ENCODE measurements at regions of chr1 and their contacts with region 1.

Region 1: GRCh38 chr1:83905315-83905907 is 93.5 kb downstream of the TTLL7 start:
- DNase-seq: peak; percentile 34
- ATAC-seq: no peak
- H3K4me3 ChIP-seq: no peak overlapping the region
- H3K4me3 Mint-ChIP-seq: no peak overlapping the region
- H3K27ac ChIP-seq: no peak overlapping the region
- H3K27ac Mint-ChIP-seq: no peak overlapping the region
- H3K4me1 ChIP-seq: no peaks in the 10 kb centered on the region
- H3K4me1 Mint-ChIP-seq: no peaks in the 10 kb centered on the region
- H3K27me3 ChIP-seq: peaks cover 0 to 4% (median 0%) of the 10 kb centered on the region in 4 experiments
- H3K27me3 Mint-ChIP-seq: peaks cover 10% of the 10 kb centered on the region
- CTCF ChIP-seq: peak; percentile 95

Region 2: GRCh38 chr1:84122780-84123382 is 217.5 kb after region 1 on chr1:
- CTCF ChIA-PET with region 1: interaction called, 3 read pairs
- POLR2A ChIA-PET with region 1: no interaction called
- intact Hi-C with region 1: loop called (anchors 2 kb)
- DNase-seq: peak; percentile 53
- ATAC-seq: no peak
- H3K4me3 ChIP-seq: no peak overlapping the region
- H3K4me3 Mint-ChIP-seq: no peak overlapping the region
- H3K27ac ChIP-seq: no peak overlapping the region
- H3K27ac Mint-ChIP-seq: no peak overlapping the region
- H3K4me1 ChIP-seq: no peaks in the 10 kb centered on the region
- H3K4me1 Mint-ChIP-seq: peaks cover 1% of the 10 kb centered on the region
- H3K27me3 ChIP-seq: no peaks in the 10 kb centered on the region
- H3K27me3 Mint-ChIP-seq: no peaks in the 10 kb centered on the region
- CTCF ChIP-seq: peak; percentile 78

Region 3: GRCh38 chr1:84620720-84621313 is 715.4 kb after region 1 on chr1:
- CTCF ChIA-PET with region 1: no interaction called
- POLR2A ChIA-PET with region 1: no interaction called
- intact Hi-C with region 1: loop called (anchors 2 kb)
- DNase-seq: peak; percentile 90
- ATAC-seq: peak; percentile 92
- H3K4me3 ChIP-seq: peak overlapping the region in 4 of 5 experiments; percentile 59 to 84 (median 72)
- H3K4me3 Mint-ChIP-seq: peak overlapping the region; percentile 96
- H3K27ac ChIP-seq: no peak overlapping the region
- H3K27ac Mint-ChIP-seq: peak overlapping the region; percentile 69
- H3K4me1 ChIP-seq: peaks cover 0 to 4% of the 10 kb centered on the region in 2 donors
- H3K4me1 Mint-ChIP-seq: peaks cover 6% of the 10 kb centered on the region
- H3K27me3 ChIP-seq: peaks cover 0 to 5% (median 0%) of the 10 kb centered on the region in 4 experiments
- H3K27me3 Mint-ChIP-seq: peaks cover 6% of the 10 kb centered on the region
- CTCF ChIP-seq: peak; percentile 100

Region 4: GRCh38 chr1:84753516-84754385 is 848.3 kb after region 1 on chr1:
- CTCF ChIA-PET with region 1: interaction called, 11 read pairs
- POLR2A ChIA-PET with region 1: no interaction called
- intact Hi-C with region 1: no loop called
- DNase-seq: peak; percentile 76
- ATAC-seq: peak; percentile 81
- H3K4me3 ChIP-seq: no peak overlapping the region
- H3K4me3 Mint-ChIP-seq: no peak overlapping the region
- H3K27ac ChIP-seq: no peak overlapping the region
- H3K27ac Mint-ChIP-seq: no peak overlapping the region
- H3K4me1 ChIP-seq: peaks cover 1 to 3% of the 10 kb centered on the region in 2 donors
- H3K4me1 Mint-ChIP-seq: peaks cover 3% of the 10 kb centered on the region
- H3K27me3 ChIP-seq: peaks cover 0 to 16% (median 5%) of the 10 kb centered on the region in 4 experiments
- H3K27me3 Mint-ChIP-seq: peaks cover 30% of the 10 kb centered on the region
- CTCF ChIP-seq: peak; percentile 95

Region 5: GRCh38 chr1:84772428-84772943 is 867.1 kb after region 1 on chr1:
- CTCF ChIA-PET with region 1: interaction called, 11 read pairs
- POLR2A ChIA-PET with region 1: no interaction called
- intact Hi-C with region 1: loop called (anchors 1 kb)
- DNase-seq: peak; percentile 73
- ATAC-seq: peak; percentile 56
- H3K4me3 ChIP-seq: no peak overlapping the region
- H3K4me3 Mint-ChIP-seq: no peak overlapping the region
- H3K27ac ChIP-seq: no peak overlapping the region
- H3K27ac Mint-ChIP-seq: no peak overlapping the region
- H3K4me1 ChIP-seq: no peaks in the 10 kb centered on the region
- H3K4me1 Mint-ChIP-seq: no peaks in the 10 kb centered on the region
- H3K27me3 ChIP-seq: peaks cover 0 to 7% (median 3%) of the 10 kb centered on the region in 4 experiments
- H3K27me3 Mint-ChIP-seq: peaks cover 18% of the 10 kb centered on the region
- CTCF ChIP-seq: peak; percentile 94

Region 6: DNA sequence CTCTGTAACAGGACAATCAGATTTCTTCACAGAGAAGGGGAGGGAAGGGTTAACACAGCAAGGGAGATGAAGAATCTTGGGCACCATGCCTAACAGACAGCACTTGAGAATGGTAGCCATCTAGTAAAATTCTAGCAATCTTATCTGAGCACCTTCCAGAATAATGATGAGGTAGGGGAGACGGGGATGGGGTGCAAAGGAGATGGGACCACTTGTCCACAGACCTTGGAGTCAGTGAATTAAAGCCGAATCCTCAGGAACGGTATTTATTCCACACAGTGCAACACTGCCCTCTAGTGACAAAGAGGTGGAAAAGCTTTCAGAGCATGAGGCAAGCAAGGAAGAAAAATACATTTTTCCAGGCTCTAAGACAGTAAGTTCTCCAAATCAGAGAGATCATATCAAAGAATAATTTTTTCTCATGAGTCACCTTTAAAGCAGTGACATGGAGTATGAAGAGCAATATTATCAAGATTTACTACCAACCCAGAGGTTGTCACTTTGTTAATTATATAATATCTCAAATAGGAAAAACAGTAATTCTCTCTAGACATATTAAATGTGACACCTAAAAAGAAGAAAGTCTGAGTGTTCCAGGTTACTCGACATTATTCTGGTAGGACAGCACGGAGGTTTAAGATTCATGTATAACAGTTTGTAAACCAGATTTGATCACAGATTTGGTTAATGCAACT is 1030.9 kb after region 1 on chr1:
- CTCF ChIA-PET with region 1: interaction called, 8 read pairs
- POLR2A ChIA-PET with region 1: no interaction called
- intact Hi-C with region 1: loop called (anchors 10 kb)
- DNase-seq: peak; percentile 68
- ATAC-seq: peak; percentile 62
- H3K4me3 ChIP-seq: no peak overlapping the region
- H3K4me3 Mint-ChIP-seq: no peak overlapping the region
- H3K27ac ChIP-seq: no peak overlapping the region
- H3K27ac Mint-ChIP-seq: no peak overlapping the region
- H3K4me1 ChIP-seq: peaks cover 0 to 3% of the 10 kb centered on the region in 2 donors
- H3K4me1 Mint-ChIP-seq: peaks cover 2% of the 10 kb centered on the region
- H3K27me3 ChIP-seq: no peaks in the 10 kb centered on the region
- H3K27me3 Mint-ChIP-seq: no peaks in the 10 kb centered on the region
- CTCF ChIP-seq: peak; percentile 98

Measured in B cell (primary cell).